ENCODE measurements at regions of chr6 and their contacts with region 1.

Region 1: GRCh38 chr6:80605165-80605989 is 498.9 kb downstream of the BCKDHB start:
- DNase-seq: peak; percentile 18
- ATAC-seq: peak; percentile 73
- H3K4me3 ChIP-seq: no peak overlapping the region
- H3K27ac ChIP-seq: no peak overlapping the region
- H3K4me1 ChIP-seq: no peaks in the 10 kb centered on the region
- H3K27me3 ChIP-seq: no peaks in the 10 kb centered on the region
- CTCF ChIP-seq: peak; percentile 51
- EP300 ChIP-seq: no peak
- POLR2A ChIP-seq: no peak
- RAD21 ChIP-seq: 0 out of 2 replicates have a peak, but pooled peaks have one; percentile 29

Region 2: DNA sequence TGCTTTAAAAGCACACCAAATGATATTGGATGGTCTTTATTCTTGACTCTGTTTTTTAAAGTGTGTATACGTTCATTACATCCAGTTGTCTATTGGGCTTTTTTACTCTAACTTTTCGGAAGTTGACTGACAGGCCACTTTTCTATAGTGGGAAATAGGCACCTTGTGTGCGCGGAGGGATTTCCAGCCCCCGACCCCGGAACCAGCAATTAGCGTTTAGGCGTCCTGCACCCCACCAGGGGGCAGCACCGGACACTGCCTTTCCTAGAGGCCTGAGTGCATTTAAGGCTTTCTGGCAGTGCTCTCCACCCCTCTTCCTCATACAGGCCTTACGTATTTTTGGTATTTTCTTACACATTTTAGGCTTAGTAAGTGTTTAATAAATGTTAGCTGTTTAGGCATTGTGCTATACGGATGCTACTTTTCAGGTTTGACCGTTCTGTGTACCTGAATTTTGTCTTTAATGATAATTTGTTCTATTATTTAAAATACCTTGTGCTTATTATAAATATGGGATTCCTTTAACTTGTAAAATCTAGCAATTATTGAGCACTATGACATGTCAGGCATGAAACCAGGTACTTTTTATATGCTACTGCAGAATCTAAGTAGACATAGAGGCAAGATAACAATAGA is 267.1 kb before region 1 on chr6:
- CTCF ChIA-PET with region 1: interaction called, 3 read pairs
- POLR2A ChIA-PET with region 1: no interaction called
- in situ Hi-C with region 1: no loop called
- intact Hi-C with region 1: loop called (anchors 1 kb)
- DNase-seq: peak; percentile 47
- ATAC-seq: peak; percentile 92
- H3K4me3 ChIP-seq: no peak overlapping the region
- H3K27ac ChIP-seq: no peak overlapping the region
- H3K4me1 ChIP-seq: no peaks in the 10 kb centered on the region
- H3K27me3 ChIP-seq: no peaks in the 10 kb centered on the region
- CTCF ChIP-seq: peak; percentile 83
- EP300 ChIP-seq: no peak
- POLR2A ChIP-seq: no peak
- RAD21 ChIP-seq: peak; percentile 61; the same call in 1 of the 2 replicates

Region 3: DNA sequence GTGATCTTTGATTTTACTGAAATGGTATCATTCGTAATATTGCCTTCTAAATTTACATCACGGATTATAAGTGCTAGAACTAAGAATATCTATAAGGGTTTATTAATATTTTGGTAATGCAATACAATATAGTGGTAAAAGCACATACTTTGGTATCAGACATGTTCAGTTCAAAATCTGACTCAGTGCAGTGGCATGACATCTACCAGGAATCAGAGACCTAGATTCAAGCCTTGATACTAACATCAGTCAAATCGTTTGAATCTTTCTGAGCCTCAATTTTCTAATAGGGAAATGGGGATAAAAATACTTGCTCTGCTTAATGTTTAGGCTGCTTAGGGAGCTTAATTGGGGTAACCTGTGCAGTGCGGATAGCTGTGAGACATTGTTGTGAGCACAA is 10.9 kb before region 1 on chr6:
- CTCF ChIA-PET with region 1: no interaction called
- POLR2A ChIA-PET with region 1: no interaction called
- in situ Hi-C with region 1: no loop called
- intact Hi-C with region 1: no loop called
- DNase-seq: no peak
- ATAC-seq: no peak
- H3K4me3 ChIP-seq: no peak overlapping the region
- H3K27ac ChIP-seq: no peak overlapping the region
- H3K4me1 ChIP-seq: no peaks in the 10 kb centered on the region
- H3K27me3 ChIP-seq: no peaks in the 10 kb centered on the region
- CTCF ChIP-seq: no peak
- EP300 ChIP-seq: no peak
- POLR2A ChIP-seq: no peak
- RAD21 ChIP-seq: no peak

Region 4: GRCh38 chr6:81465859-81466258 is 860.5 kb after region 1 on chr6:
- CTCF ChIA-PET with region 1: no interaction called
- POLR2A ChIA-PET with region 1: no interaction called
- in situ Hi-C with region 1: no loop called
- intact Hi-C with region 1: loop called (anchors 10 kb)
- DNase-seq: peak; percentile 2
- ATAC-seq: peak; percentile 44; the same call in 1 of the 3 replicates
- H3K4me3 ChIP-seq: no peak overlapping the region
- H3K27ac ChIP-seq: no peak overlapping the region
- H3K4me1 ChIP-seq: no peaks in the 10 kb centered on the region
- H3K27me3 ChIP-seq: no peaks in the 10 kb centered on the region
- CTCF ChIP-seq: peak; percentile 57
- EP300 ChIP-seq: no peak
- POLR2A ChIP-seq: no peak
- RAD21 ChIP-seq: 0 out of 2 replicates have a peak, but pooled peaks have one; percentile 25